Endothelial cell of umbilical vein (primary cell): ENCODE measurements at regions of chr5 and their contacts with region 1.

Region 1: GRCh38 chr5:14463629-14464028 is 118.0 kb upstream of the OTULINL start:
- DNase-seq: peak; percentile 96
- H3K4me3 ChIP-seq: no peak overlapping the region
- H3K27ac ChIP-seq: peak overlapping the region; percentile 71
- H3K4me1 ChIP-seq: peaks cover 25% of the 10 kb centered on the region
- H3K27me3 ChIP-seq: no peaks in the 10 kb centered on the region
- CTCF ChIP-seq: no peak
- POLR2A ChIP-seq: peak; percentile 57

Region 2: GRCh38 chr5:14447958-14448911 is 15.4 kb before region 1 on chr5:
- CTCF ChIA-PET with region 1: no interaction called
- POLR2A ChIA-PET with region 1: no interaction called
- dilution Hi-C with region 1: no loop called
- intact Hi-C with region 1: loop called (anchors 1 kb)
- DNase-seq: peak; percentile 48
- H3K4me3 ChIP-seq: no peak overlapping the region
- H3K27ac ChIP-seq: peak overlapping the region; percentile 84
- H3K4me1 ChIP-seq: peaks cover 72% of the 10 kb centered on the region
- H3K27me3 ChIP-seq: no peaks in the 10 kb centered on the region
- CTCF ChIP-seq: no peak
- POLR2A ChIP-seq: no peak

Region 3: DNA sequence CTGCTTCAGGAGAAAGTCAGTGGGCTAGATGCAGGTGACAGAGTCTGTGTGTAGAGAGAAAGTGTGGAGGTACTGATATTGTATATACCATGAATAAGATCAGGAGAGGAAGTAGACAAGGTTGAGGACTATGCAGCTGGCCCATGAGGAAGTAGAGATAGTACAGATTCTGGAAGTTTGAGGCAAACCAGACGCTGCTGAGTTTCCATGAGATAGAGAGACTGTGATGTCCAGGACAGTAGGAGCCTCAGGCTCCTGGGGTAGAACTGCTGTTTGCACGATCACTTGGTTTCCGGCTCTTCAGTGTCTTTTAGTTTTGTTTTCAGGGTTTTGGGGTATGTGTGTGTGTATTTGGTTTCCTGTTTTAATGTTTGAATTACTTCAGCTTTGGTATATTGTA is 131.6 kb after region 1 on chr5:
- CTCF ChIA-PET with region 1: no interaction called
- POLR2A ChIA-PET with region 1: no interaction called
- dilution Hi-C with region 1: no loop called
- intact Hi-C with region 1: no loop called
- DNase-seq: no peak
- H3K4me3 ChIP-seq: no peak overlapping the region
- H3K27ac ChIP-seq: no peak overlapping the region
- H3K4me1 ChIP-seq: no peaks in the 10 kb centered on the region
- H3K27me3 ChIP-seq: peaks cover 4 to 22% of the 10 kb centered on the region in 2 experiments
- CTCF ChIP-seq: no peak
- POLR2A ChIP-seq: no peak